Vagina (tissue), 2 donors: ENCODE measurements at regions of chr6 and their contacts with region 1.

Region 1: DNA sequence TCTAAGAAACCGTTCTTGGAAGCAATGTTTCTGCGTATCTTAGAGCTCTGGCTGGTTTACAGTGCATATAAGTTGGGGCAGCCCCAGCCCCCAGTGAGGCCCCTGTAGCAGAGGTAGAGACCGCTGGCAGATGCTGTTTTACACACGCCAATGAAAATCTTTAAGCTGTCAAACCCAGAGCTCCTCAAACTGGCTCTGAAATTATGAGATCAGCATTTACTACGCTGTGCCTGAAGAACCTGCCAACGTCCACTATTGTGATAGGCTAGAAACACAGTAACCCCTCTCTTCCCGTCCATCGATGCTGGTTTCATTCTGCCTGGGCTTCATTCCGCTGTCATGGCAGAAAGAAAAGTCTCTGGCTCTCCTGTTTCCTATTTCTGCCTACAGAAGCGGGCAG is 160.6 kb downstream of the SMOC2 start:
- DNase-seq: no peak
- H3K4me3 ChIP-seq: no peak overlapping the region
- H3K27ac ChIP-seq: no peak overlapping the region
- H3K4me1 ChIP-seq: no peaks in the 10 kb centered on the region
- H3K27me3 ChIP-seq: no peaks in the 10 kb centered on the region
- CTCF ChIP-seq: no peak
- POLR2A ChIP-seq: no peak

Region 2: DNA sequence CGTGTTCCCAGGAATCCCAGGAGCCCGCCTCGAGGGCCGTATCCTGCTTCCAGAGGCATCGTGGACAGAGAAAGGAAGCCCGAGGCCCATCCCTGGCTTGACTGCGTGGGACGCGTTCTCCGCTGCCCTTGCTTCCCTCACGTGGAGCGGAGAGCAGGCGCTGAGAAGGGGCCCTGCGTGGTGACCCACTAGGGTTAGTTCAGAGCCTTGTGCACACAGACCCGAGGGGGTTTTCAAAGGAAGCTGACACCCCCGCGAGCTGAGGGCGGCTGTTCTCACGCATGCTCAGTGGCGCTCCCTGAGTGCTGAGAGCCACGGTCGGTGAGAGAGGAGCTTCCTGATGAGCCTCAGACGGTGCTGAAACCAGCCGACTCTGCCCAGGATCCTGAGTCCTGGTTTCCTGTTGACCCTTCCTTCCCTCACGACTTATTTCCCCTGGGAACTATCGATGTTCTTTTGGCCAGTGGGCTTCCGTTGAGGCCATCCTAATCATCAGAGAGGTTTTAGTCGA is 1507.6 kb before region 1 on chr6:
- intact Hi-C with region 1: loop called (anchors 5 kb)
- DNase-seq: peak in 1 of 2 donors; percentile 70
- H3K4me3 ChIP-seq: no peak overlapping the region
- H3K27ac ChIP-seq: no peak overlapping the region
- H3K4me1 ChIP-seq: no peaks in the 10 kb centered on the region
- H3K27me3 ChIP-seq: no peaks in the 10 kb centered on the region
- CTCF ChIP-seq: no peak
- POLR2A ChIP-seq: no peak

Region 3: GRCh38 chr6:168377484-168377855 is 224.1 kb before region 1 on chr6:
- intact Hi-C with region 1: no loop called
- DNase-seq: no peak
- H3K4me3 ChIP-seq: no peak overlapping the region
- H3K27ac ChIP-seq: no peak overlapping the region
- H3K4me1 ChIP-seq: no peaks in the 10 kb centered on the region
- H3K27me3 ChIP-seq: no peaks in the 10 kb centered on the region
- CTCF ChIP-seq: no peak
- POLR2A ChIP-seq: no peak